Astrocyte of the cerebellum (primary cell): ENCODE measurements at regions of chr1 and their contacts with region 1.

Region 1: DNA sequence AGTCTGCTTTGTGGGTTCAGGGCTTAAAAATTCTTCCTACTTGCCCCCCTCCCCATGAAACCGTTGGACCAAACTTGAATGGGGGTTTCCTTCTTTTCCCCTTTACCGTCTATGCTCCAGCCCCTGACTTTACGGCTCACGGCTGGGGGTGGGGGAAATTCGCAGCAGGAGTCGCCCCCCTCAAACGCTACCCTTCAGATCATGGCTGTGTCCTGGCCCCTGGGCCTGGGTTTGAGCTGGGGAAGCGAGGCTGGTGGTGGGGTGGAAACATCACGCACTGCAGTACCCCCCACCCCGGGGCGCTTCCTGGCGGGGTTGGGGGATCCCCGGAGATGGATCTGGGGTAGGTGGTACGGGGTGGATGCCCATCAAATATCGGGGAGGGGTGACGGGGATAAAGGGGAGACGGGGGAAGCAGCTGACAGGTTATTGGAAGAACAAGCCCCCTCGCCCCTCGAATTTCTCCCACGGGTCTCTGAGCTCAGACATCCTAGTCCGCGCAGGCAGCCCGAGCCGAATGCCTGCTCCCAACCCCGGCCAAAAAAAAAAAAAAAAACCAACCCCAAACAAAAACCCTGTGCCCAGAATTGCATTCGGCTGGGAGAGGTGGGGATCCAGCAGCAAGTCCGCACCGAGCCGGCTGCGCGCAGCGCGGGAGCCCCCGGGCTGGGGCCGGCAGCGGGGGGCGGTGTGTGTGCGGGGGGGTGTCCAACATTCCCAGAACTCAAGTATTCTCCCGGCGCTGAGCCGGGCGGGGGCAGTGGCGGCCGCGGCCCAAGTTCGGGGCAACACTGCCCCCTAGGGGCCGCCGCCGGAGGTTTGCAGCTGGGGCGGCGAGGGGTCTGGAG is 59.0 kb upstream of the ACOT11 start:
- DNase-seq: peak; percentile 44
- H3K4me3 ChIP-seq: peak overlapping the region; percentile 47
- CTCF ChIP-seq: peak; percentile 86

Region 2: DNA sequence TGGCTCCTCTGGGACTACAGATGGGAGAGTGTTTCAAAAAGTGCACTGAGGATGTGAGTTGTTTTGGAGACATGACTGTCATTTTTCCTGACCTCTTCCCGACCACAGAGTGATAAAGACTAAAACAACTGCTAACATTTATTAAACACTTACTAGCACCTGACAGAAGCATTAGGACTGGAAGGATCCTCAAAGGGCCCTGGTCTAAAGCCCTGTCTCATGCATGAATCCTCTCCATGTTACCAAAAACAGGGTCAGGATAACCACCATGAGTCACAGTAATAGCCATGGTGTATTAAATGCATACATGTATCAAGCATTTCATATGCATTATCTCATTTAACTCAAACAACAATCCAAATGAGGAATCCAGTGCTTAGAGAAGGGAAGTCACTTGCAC is 300.7 kb before region 1 on chr1:
- in situ Hi-C with region 1: no loop called
- DNase-seq: no peak
- H3K4me3 ChIP-seq: no peak overlapping the region
- CTCF ChIP-seq: no peak

Region 3: GRCh38 chr1:54324251-54325140 is 164.5 kb before region 1 on chr1:
- in situ Hi-C with region 1: loop called (anchors 5 kb)
- DNase-seq: no peak
- H3K4me3 ChIP-seq: no peak overlapping the region
- CTCF ChIP-seq: no peak

Region 4: DNA sequence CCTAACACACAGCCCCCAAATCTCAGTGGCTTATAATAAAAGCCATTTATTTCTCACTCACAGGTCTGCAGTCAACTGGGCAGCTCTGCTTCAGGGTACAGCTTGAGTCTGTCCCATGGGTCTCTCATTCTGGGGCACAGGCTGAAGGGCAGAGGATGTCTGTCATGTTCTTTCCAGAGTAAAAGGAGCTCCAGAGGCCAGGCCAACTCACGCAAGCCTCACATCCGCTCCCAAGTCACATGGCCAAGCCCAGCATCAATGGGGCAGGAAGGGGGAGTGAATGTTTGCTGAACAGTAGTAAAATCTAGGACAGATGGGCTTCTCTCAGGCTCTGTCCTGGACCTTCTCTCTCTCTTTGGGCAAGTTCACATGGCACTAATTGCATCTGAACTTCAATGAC is 75.7 kb before region 1 on chr1:
- in situ Hi-C with region 1: loop called (anchors 5 kb)
- DNase-seq: no peak
- H3K4me3 ChIP-seq: no peak overlapping the region
- CTCF ChIP-seq: no peak

Region 5: DNA sequence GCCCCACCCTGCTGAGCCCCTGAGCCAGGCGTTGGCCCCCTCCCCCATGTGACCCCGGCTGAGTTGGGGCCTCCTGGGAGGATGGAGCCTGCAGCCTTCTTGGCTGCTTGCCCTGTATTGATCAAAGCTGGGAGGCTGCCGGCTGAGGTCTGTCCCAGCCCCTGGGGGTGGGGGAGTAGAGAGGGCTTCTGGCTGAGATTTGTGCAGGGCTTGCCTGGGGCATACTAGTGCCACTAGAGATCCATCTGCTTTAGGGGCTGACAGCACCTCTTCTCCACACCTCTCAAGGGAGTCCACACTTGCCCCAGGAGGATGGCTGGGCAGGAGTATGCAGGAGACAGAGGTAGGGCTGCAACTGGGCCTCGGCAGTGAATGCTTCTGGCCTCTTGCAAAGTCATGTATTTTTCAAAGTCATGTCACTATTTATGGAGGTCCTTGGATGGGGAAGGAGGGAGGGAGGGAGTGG is 29.2 kb before region 1 on chr1:
- in situ Hi-C with region 1: no loop called
- DNase-seq: no peak
- H3K4me3 ChIP-seq: no peak overlapping the region
- CTCF ChIP-seq: no peak